ENCODE measurements at regions of chr12 and their contacts with region 1.

Region 1: DNA sequence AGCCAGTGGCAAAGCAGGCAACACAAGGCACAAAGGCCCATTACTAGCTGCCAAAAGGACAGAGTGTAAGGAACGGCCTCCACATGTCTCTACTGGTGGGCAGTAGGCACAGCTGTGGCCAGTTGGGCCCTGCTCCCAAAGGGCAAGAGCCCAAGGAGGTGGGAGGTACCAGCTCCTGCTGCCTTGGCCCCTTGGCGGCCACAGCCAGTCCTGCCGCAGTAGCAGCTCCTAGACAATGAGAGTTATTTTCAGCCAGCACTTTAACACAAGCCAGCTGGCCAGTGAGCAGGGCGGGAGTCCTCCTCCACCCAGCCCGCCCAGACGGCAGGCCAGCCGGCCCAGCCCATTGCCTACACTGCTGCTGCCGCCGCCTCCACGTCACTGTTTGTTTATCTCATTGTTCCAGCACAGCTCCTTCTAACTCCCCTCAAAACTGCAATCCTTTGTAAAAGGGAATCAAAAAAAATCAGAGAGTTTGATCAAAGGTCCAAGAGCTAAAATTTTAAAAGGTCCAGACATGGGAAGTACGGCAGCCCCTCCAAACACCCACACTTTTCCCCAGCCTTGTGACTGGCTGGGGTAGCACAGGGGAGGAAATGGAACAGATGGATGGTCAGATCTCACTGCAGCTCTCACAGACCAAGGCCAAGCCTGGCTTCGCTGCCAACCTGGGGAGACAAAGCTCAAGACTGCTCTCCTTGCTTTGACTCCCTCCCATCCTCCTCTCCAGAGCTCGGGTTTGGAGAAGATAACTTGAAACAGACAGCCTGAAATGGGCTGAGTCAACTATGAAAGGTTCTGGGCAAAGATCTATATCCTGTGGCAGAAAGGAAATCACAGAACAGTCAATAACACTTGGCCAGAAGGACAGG is 33.5 kb downstream of the FMNL3 start:
- DNase-seq: no peak
- ATAC-seq: peak; percentile 32
- H3K4me3 Mint-ChIP-seq: peak overlapping the region; percentile 16
- H3K27ac Mint-ChIP-seq: peak overlapping the region; percentile 97
- H3K4me1 Mint-ChIP-seq: peaks cover 81% of the 10 kb centered on the region
- H3K27me3 Mint-ChIP-seq: no peaks in the 10 kb centered on the region
- CTCF ChIP-seq: no peak

Region 2: GRCh38 chr12:49491823-49492222 is 181.9 kb before region 1 on chr12:
- CTCF ChIA-PET with region 1: no interaction called
- POLR2A ChIA-PET with region 1: no interaction called
- intact Hi-C with region 1: no loop called
- DNase-seq: no peak
- ATAC-seq: no peak
- H3K4me3 Mint-ChIP-seq: no peak overlapping the region
- H3K27ac Mint-ChIP-seq: no peak overlapping the region
- H3K4me1 Mint-ChIP-seq: no peaks in the 10 kb centered on the region
- H3K27me3 Mint-ChIP-seq: no peaks in the 10 kb centered on the region
- CTCF ChIP-seq: no peak

Region 3: GRCh38 chr12:49662998-49663843 is 10.5 kb before region 1 on chr12:
- CTCF ChIA-PET with region 1: interaction called, 11 read pairs
- POLR2A ChIA-PET with region 1: interaction called, 23 read pairs
- intact Hi-C with region 1: no loop called
- DNase-seq: peak; percentile 88
- ATAC-seq: peak; percentile 92
- H3K4me3 Mint-ChIP-seq: peak overlapping the region; percentile 67
- H3K27ac Mint-ChIP-seq: peak overlapping the region; percentile 97
- H3K4me1 Mint-ChIP-seq: peaks cover 79% of the 10 kb centered on the region
- H3K27me3 Mint-ChIP-seq: no peaks in the 10 kb centered on the region
- CTCF ChIP-seq: no peak

Region 4: GRCh38 chr12:49687941-49688340 is 14.3 kb after region 1 on chr12:
- CTCF ChIA-PET with region 1: interaction called, 12 read pairs
- POLR2A ChIA-PET with region 1: interaction called, 7 read pairs
- intact Hi-C with region 1: no loop called
- DNase-seq: no peak
- ATAC-seq: no peak
- H3K4me3 Mint-ChIP-seq: no peak overlapping the region
- H3K27ac Mint-ChIP-seq: no peak overlapping the region
- H3K4me1 Mint-ChIP-seq: peaks cover 54% of the 10 kb centered on the region
- H3K27me3 Mint-ChIP-seq: no peaks in the 10 kb centered on the region
- CTCF ChIP-seq: no peak

Region 5: DNA sequence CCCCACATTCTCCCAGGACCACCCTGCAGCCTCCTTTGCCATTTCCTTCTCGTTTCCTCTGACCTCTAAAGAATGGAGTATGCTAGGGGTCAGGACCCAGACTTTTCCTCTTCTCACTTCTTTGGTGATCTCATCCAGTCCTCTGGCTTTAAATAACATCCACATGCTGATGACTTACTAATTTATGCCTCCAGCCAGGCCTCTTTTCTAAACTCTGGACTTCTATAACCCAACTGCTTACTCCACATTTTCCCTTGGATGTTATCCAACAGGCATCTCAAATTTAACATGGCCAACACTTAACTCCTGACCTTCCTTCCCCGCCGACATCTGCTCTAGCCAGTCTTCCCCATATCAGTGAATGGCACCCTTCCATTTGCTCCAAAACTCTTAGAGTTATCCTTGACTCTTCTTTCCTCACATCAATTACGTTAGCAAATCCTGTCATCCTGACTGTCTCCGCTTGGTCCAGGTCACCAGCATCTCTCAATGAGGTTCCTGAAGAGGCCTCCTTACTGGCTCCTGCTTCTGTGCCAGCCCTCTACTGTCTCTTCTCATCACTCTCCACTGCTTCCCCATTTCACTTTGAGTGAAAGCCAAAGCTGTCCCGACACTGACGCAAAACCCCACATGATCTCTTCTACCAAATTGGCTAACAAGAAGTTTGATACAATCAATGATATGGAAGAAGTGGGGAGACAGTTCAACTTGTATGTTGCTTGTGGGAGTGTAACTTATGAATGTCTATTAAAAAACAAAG is 110.4 kb after region 1 on chr12:
- CTCF ChIA-PET with region 1: no interaction called
- POLR2A ChIA-PET with region 1: no interaction called
- intact Hi-C with region 1: no loop called
- DNase-seq: no peak
- ATAC-seq: no peak
- H3K4me3 Mint-ChIP-seq: no peak overlapping the region
- H3K27ac Mint-ChIP-seq: no peak overlapping the region
- H3K4me1 Mint-ChIP-seq: no peaks in the 10 kb centered on the region
- H3K27me3 Mint-ChIP-seq: peaks cover 13% of the 10 kb centered on the region
- CTCF ChIP-seq: no peak

Region 6: GRCh38 chr12:49863946-49864797 is 190.5 kb after region 1 on chr12:
- CTCF ChIA-PET with region 1: no interaction called
- POLR2A ChIA-PET with region 1: no interaction called
- intact Hi-C with region 1: no loop called
- DNase-seq: no peak
- ATAC-seq: no peak
- H3K4me3 Mint-ChIP-seq: no peak overlapping the region
- H3K27ac Mint-ChIP-seq: no peak overlapping the region
- H3K4me1 Mint-ChIP-seq: no peaks in the 10 kb centered on the region
- H3K27me3 Mint-ChIP-seq: peaks cover 3% of the 10 kb centered on the region
- CTCF ChIP-seq: no peak

Measured in activated CD8-positive, alpha-beta T cell treated with anti-CD3 and anti-CD28 coated beads for 36 hours (primary cell).